ENCODE measurements at regions of chr5 and their contacts with region 1.

Region 1: DNA sequence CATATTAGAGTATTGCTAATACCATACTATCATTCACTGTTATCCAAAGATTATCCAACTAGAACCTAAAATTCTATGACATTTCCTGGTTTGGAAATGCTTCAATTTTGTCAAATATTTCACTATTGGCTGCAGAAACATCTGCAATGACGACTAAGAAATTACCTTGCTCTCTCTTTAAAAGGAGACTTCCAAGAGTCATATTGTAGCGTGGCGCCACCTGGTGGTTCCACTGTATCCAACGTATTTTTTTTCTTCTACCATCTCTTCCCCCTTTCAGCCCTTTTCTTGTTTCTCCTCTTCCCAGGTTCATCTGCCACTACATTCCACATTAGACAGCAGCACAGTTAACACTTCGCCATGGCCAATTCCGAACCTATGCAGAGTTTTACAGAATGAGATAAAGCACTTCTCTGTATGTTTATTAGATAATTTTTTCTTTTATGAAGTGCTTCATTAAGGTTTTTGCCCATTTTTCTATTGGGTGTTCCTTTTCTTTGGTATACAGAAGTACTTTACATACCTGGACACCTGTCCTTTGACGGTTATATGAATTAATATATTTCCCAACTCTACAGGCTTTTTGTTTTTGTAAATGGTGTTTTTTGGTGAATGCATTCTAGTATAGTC is 153.5 kb downstream of the CDC42SE2 start:
- DNase-seq: peak; percentile 76
- H3K4me3 ChIP-seq: no peak overlapping the region
- H3K27ac ChIP-seq: no peak overlapping the region
- H3K4me1 ChIP-seq: peaks cover 10% of the 10 kb centered on the region
- CTCF ChIP-seq: peak; percentile 96

Region 2: DNA sequence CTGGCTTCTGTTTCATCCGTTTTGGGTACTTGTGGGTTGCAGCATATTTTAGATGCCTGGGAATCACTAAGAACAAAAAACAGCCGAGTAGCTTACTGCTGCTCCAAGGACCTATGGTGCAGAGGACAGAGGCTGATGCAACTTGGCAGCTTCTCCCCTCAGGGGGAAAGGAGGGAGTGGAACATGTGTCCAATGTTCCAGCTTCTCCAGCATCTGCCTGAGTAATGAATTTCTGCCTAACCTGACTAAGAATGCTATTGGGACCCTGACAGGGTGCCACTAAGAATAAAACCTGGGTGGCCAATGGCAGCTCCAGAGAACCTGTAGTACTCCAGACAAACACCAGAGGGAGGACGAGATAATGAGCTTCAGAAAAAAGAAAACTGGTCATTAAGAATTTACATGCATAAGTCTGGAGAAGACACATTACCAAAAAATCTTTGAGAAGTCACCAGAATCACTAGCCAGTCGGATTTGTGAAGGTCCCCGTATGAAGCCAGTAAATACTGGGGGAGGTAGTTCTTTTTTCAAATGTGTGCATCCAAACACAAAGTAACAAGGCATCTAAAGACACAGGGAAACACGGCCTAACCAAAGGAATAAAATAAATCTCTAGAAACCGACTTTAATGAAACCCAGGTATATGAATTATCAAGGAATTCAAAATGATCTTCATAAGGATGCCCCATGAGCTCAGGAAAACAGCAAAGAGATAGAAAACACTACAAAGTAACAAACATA is 545.8 kb before region 1 on chr5:
- CTCF ChIA-PET with region 1: no interaction called
- POLR2A ChIA-PET with region 1: no interaction called
- intact Hi-C with region 1: loop called (anchors 2 kb)
- DNase-seq: peak; percentile 30
- H3K4me3 ChIP-seq: no peak overlapping the region
- H3K27ac ChIP-seq: no peak overlapping the region
- H3K4me1 ChIP-seq: no peaks in the 10 kb centered on the region
- CTCF ChIP-seq: peak; percentile 75

Region 3: DNA sequence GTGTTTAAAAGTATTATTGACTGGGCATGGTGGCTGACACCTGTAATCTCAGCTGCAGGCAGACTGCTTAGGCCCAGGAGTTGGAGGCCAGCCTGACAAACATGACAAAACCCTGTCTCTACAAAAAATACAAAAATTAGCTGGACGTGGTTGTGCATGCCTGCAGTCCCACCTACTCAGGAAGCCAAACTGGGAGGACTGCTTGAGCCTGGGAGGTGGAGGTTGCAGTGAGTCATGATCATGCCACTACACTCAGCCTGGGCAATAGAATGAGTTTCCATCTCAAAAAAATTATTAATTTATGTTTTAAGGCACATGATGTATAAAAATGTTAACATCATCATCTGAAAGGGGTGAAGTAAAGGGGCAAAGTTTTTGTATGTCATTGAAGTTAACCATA is 429.2 kb after region 1 on chr5:
- CTCF ChIA-PET with region 1: no interaction called
- POLR2A ChIA-PET with region 1: no interaction called
- intact Hi-C with region 1: no loop called
- DNase-seq: no peak
- H3K4me3 ChIP-seq: no peak overlapping the region
- H3K27ac ChIP-seq: no peak overlapping the region
- H3K4me1 ChIP-seq: no peaks in the 10 kb centered on the region
- CTCF ChIP-seq: no peak

Region 4: DNA sequence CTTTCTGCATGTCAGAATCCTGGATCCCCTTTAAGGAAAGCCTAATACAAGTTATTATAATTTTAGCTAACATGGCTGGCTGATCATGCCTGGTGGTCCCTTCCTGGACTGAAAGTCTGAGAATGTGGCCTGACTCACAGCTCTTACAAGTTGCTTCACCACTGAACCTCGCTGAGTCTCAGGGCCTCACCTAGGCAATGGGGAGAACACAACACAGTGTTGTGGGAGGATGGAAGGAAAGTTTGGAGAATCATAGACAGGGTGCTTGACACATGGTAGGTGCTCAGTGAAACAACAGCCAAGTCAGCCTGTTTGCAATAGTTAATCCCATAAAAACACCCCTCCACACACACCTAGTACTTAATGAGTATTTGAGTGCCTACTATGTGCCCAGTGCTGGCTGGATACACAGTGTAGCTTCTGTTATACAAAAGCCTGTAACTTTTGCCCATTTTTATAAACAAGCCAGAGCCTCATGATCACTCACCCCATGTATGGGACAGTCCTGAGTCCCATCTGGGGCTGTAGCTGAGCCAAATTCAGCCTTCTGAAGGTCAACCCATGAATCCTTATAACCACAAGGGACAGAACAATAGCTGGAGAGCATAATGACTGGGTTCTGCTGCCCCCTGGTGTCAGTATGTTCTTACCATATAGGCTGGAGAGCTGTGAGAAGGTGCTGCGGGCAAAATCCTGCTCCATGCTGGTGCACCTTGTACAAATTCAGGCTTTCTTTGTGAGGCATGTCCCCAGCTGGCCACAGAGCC is 590.2 kb after region 1 on chr5:
- CTCF ChIA-PET with region 1: no interaction called
- POLR2A ChIA-PET with region 1: no interaction called
- intact Hi-C with region 1: loop called (anchors 5 kb)
- DNase-seq: peak; percentile 82
- H3K4me3 ChIP-seq: no peak overlapping the region
- H3K27ac ChIP-seq: no peak overlapping the region
- H3K4me1 ChIP-seq: no peaks in the 10 kb centered on the region
- CTCF ChIP-seq: peak; percentile 87